Mammary epithelial cell (primary cell): ENCODE measurements at regions of chr4 and their contacts with region 1.

Region 1: DNA sequence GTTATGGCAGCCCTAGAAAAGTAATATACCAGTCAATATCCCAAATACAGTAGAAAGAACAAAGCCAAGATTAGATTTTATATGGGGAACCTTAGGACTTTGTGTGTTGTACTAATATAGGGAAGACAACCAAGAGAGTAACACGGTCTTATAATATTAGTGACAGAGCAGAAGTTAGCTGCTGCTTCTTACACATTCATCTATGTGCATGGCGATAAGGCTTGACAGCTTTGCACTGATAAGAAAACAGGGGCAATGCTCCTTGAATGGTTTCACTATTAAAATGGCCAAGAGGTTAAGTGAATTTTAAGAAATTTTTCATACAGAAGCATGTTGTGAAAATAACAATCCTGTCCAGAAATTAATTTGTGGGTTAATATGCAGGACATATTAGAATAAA is 521.6 kb downstream of the CCSER1 start:
- DNase-seq: no peak
- H3K4me3 ChIP-seq: no peak overlapping the region
- H3K27ac ChIP-seq: no peak overlapping the region
- H3K4me1 ChIP-seq: no peaks in the 10 kb centered on the region
- H3K27me3 ChIP-seq: no peaks in the 10 kb centered on the region
- CTCF ChIP-seq: no peak

Region 2: DNA sequence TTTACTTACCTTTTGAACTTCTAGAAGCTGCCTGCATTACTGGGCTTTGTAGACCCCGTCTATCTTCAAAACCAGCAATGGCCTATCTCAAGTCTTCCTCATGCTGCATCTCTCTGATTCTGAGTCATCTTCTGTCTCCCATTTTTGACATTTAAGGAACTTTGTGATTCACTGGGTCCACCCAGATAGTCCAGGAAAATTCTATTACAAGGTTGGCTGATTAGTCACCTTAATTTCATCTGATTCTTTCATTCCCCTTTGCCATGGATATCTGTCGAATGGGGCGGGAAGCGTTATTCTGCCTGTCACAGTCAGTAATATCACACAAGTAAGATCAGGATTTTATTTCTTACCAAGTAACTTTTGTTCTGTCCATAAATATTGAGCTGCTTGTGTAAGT is 96.4 kb after region 1 on chr4:
- CTCF ChIA-PET with region 1: interaction called, 11 read pairs
- dilution Hi-C with region 1: no loop called
- in situ Hi-C with region 1: no loop called
- intact Hi-C with region 1: no loop called
- DNase-seq: peak; percentile 59
- H3K4me3 ChIP-seq: no peak overlapping the region
- H3K27ac ChIP-seq: no peak overlapping the region
- H3K4me1 ChIP-seq: no peaks in the 10 kb centered on the region
- H3K27me3 ChIP-seq: no peaks in the 10 kb centered on the region
- CTCF ChIP-seq: no peak